BJ (cell line): ENCODE measurements at regions of chr4 and their contacts with region 1.

Region 1: DNA sequence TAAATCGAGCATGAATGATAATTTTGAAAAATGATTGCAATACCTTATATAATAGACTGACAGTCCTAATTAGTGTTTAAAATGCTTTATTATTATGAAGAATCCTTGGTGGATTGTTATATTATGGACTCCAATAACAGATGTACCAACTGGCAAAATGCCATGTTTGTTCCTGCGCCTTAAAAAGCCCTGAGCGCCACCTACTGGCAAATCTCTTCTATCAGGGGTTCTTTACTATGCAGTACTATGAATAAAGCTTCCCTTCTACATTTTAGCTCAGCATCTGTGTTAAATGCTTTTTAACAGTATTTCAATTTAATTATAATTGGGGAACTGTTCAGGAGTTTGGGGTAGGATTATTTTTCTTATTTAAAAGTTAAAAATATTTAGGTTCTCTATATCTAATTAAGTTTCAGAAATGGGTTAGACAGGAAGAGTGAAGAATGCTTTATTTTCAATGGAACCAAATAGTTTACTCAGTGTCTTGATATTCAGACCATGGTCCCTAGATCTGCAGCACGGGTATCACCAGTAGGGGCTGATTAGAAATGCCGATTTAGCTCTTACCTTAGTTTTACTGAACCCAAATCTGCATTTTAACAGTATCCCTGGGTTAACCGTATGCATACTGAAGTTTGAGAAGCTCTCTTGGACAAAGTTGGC is 20.1 kb downstream of the CFAP97 start:
- DNase-seq: no peak
- H3K4me3 ChIP-seq: no peak overlapping the region
- H3K27me3 ChIP-seq: no peaks in the 10 kb centered on the region
- CTCF ChIP-seq: peak; percentile 83

Region 2: DNA sequence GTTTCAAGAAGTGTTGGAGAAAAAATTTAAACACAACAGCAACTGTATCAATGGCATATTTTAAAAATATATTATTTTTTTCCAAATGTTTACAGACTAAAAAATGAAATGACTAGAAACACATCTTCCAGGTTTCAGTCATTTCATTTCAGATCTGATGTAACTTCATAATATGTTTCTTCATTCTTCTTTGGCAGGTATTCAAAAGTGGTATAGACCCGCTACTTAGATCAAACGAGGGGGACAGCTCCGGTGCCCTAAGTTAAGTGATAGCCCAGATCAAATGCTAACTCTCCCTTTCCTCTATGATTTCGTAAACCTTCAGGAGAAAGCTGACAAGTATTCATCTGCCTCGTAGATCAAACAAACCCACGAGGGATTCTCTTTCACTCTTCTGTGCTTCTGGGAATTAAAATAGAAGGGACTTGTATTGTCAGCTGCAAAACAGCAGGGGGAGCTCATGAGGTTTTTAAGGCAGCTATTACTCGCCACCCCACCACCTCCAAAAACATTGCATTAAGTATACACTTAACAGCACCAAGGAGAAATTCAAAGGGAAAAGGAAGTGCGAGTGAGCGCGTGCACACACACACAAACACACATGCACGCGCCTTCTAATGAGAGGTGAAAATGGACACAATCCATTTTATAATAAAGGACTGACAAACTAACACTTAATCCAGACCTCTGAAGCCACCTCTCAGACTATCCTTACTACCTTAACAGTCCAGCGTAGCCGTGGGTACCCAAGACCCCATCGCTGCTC is 144.1 kb before region 1 on chr4:
- CTCF ChIA-PET with region 1: interaction called, 13 read pairs
- POLR2A ChIA-PET with region 1: no interaction called
- DNase-seq: peak; percentile 3
- H3K4me3 ChIP-seq: peak overlapping the region; percentile 18; the same call in 1 of the 2 replicates
- H3K27me3 ChIP-seq: no peaks in the 10 kb centered on the region; the same call in none of the 2 replicates
- CTCF ChIP-seq: peak; percentile 78

Region 3: GRCh38 chr4:185165605-185166063 is 18.1 kb before region 1 on chr4:
- CTCF ChIA-PET with region 1: interaction called, 10 read pairs
- POLR2A ChIA-PET with region 1: no interaction called
- DNase-seq: peak; percentile 55
- H3K4me3 ChIP-seq: no peak overlapping the region
- H3K27me3 ChIP-seq: no peaks in the 10 kb centered on the region
- CTCF ChIP-seq: no peak

Region 4: GRCh38 chr4:185171373-185172071 is 12.2 kb before region 1 on chr4:
- CTCF ChIA-PET with region 1: interaction called, 12 read pairs
- POLR2A ChIA-PET with region 1: no interaction called
- DNase-seq: no peak
- H3K4me3 ChIP-seq: no peak overlapping the region
- H3K27me3 ChIP-seq: no peaks in the 10 kb centered on the region
- CTCF ChIP-seq: no peak

Region 5: GRCh38 chr4:185196437-185196836 is 12.7 kb after region 1 on chr4:
- CTCF ChIA-PET with region 1: interaction called, 20 read pairs
- POLR2A ChIA-PET with region 1: no interaction called
- DNase-seq: no peak
- H3K4me3 ChIP-seq: no peak overlapping the region
- H3K27me3 ChIP-seq: no peaks in the 10 kb centered on the region
- CTCF ChIP-seq: no peak

Region 6: DNA sequence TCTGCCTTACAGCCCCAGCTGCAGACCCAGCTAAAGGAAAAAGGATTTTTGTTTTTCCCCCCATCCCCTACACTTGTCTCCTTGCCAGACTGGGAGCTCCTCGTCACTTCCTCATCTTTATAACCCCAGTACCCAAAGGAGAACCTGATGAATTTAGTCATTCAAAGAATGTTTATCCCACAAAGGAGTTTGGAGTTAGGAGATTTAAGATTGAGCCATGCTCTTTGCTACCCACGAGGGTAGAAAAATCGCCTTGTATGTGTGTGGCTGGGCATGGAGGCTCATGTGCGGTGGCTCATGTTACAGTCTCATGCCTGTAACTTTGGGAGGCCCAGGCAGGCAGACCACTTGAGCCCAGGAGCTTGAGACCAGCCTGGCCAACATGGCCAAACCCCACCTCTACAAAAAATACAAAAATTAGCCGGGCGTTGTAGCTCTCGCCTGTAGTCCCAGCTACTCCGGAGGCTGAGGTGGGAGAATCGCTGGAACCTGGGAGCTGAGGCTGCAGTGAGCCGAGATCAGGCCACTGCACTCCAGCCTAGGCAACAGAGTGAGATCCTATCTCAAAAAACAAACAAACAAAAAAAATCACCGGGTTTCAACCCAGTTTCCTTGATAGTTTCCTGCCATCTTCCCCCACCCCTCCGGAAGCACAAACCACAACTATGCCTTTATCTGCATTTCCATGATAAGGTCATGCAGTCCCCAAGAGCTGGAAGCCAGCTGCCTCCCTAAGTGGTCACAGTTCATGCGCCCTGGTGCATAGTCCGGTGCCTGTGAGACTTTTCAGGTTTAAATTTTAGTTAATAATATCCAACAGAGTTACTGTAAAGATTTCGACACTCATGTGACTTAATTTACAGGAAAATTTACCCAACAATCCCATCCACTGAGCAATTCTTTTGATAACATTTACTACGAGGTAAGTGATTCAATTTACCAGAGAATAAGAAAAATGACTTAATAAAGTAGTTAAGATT is 18.5 kb after region 1 on chr4:
- CTCF ChIA-PET with region 1: interaction called, 20 read pairs
- POLR2A ChIA-PET with region 1: no interaction called
- DNase-seq: no peak
- H3K4me3 ChIP-seq: no peak overlapping the region
- H3K27me3 ChIP-seq: no peaks in the 10 kb centered on the region
- CTCF ChIP-seq: no peak